Activated B cell treated with CpG ODN at 0.5 μM for 24 hours (primary cell): ENCODE measurements at regions of chr1 and their contacts with region 1.

Region 1: GRCh38 chr1:52702886-52703787 is 5.0 kb upstream of the COA7 start:
- DNase-seq: peak; percentile 74
- ATAC-seq: peak; percentile 87
- H3K4me3 Mint-ChIP-seq: peak overlapping the region; percentile 87
- H3K27ac Mint-ChIP-seq: peak overlapping the region; percentile 98
- H3K4me1 Mint-ChIP-seq: peaks cover 26% of the 10 kb centered on the region
- H3K27me3 Mint-ChIP-seq: peaks cover 2% of the 10 kb centered on the region
- CTCF ChIP-seq: no peak

Region 2: DNA sequence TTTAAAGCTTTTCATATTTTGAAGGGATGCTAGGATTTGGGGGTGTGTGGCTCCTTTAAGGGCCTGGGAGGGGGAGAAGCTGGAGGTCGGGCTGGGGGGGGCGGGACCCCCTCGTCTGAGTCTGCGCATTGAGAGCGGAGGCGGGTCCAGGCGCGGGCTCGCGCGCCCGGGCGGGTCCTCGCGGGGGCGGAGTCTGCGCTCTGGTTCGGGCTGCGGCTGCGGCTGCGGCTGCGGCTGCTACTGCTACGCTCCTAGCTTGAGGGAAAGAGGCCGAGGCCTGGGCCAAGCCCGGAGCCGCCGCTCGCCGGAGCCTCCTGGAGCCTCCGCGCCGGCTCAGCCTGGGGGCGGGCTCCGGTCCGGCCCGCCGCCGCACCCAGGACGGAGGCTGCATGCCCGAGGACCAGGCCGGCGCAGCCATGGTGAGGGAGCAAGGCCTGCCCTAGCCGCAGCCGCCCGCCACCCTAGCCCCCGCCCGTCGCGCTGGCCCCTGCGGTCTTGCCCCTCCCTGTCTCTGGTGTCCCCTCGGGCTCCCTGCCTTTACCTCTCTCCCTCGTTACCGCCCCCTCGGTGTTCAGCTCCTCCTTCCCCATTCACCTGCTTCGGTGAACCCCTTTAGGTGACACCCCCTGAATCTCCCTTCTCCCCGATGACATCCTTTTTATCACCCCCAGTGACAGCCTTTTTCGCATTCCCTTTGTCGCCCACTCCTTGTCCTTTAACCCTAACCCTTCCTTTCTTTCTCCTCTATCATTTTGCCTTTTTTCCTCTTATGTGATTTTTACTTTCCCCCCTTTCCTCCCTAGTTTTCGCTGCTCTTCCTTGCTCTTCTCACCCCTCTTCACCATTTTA is 23.4 kb after region 1 on chr1 and contains the start of gene ZYG11B:
- CTCF ChIA-PET with region 1: interaction called, 6 read pairs
- POLR2A ChIA-PET with region 1: interaction called, 39 read pairs
- intact Hi-C with region 1: loop called (anchors 1 kb)
- DNase-seq: peak; percentile 90
- ATAC-seq: peak; percentile 94
- H3K4me3 Mint-ChIP-seq: peak within 1 kb of the TSS; percentile 91
- H3K27ac Mint-ChIP-seq: peak within 1 kb of the TSS; percentile 85
- H3K4me1 Mint-ChIP-seq: peaks cover 35% of the 10 kb centered on the region
- H3K27me3 Mint-ChIP-seq: no peaks in the 10 kb centered on the region
- CTCF ChIP-seq: no peak
- total RNA-seq, gene ZYG11B: 14.9 and 17.3 TPM in 2 replicates

Region 3: DNA sequence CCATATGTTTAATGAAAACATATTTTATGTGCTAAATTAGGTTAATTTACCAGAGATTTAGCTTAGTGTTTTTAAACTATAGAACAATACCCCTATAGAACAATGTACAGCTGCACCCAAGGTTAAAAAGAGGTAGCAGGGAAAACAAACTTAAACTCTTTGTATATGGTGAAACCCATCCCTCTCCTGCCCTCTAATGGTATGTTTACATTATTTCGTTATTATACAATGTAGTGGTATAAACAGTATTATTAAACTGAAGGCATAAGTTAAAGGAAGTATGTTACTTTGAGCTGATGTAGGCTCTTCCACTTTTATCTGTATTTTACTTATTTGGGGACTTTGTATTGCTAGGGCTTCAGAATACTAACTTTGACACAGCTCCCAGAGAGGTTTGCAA is 122.7 kb after region 1 on chr1:
- CTCF ChIA-PET with region 1: interaction called, 5 read pairs
- POLR2A ChIA-PET with region 1: no interaction called
- intact Hi-C with region 1: loop called (anchors 2 kb)
- DNase-seq: no peak
- ATAC-seq: no peak
- H3K4me3 Mint-ChIP-seq: no peak overlapping the region
- H3K27ac Mint-ChIP-seq: no peak overlapping the region
- H3K4me1 Mint-ChIP-seq: no peaks in the 10 kb centered on the region
- H3K27me3 Mint-ChIP-seq: no peaks in the 10 kb centered on the region
- CTCF ChIP-seq: no peak

Region 4: GRCh38 chr1:52920791-52921291 is 217.7 kb after region 1 on chr1:
- CTCF ChIA-PET with region 1: interaction called, 4 read pairs
- POLR2A ChIA-PET with region 1: interaction called, 12 read pairs
- intact Hi-C with region 1: loop called (anchors 1 kb)
- DNase-seq: no peak
- ATAC-seq: no peak
- H3K4me3 Mint-ChIP-seq: peak overlapping the region; percentile 85
- H3K27ac Mint-ChIP-seq: no peak overlapping the region
- H3K4me1 Mint-ChIP-seq: peaks cover 18% of the 10 kb centered on the region
- H3K27me3 Mint-ChIP-seq: peaks cover 2% of the 10 kb centered on the region
- CTCF ChIP-seq: no peak

Region 5: DNA sequence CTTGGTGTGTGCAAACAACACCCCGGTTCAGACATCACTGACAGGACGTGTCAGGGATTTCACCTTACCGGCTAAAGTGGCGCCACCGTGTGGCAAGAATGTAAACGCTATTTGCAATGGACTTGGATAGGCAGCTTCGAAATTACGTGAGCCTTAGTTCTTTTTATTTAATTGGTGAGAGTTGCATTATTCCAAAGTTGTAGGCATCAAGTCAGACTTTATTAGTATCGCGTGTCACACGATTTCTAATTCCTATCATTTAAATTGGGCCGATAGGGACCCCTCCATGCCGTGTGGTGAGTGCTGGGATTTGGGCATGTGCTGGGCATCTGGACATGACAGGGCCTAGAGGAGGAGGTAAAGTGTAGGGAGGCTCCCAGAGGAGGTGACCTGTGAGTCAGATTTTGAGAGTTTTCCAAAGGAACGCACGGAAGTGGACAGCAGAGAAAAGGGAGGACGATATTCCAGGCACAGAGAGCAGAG is 479.0 kb after region 1 on chr1:
- CTCF ChIA-PET with region 1: interaction called, 4 read pairs
- POLR2A ChIA-PET with region 1: no interaction called
- intact Hi-C with region 1: loop called (anchors 1 kb)
- DNase-seq: peak; percentile 62
- ATAC-seq: peak; percentile 71
- H3K4me3 Mint-ChIP-seq: no peak overlapping the region
- H3K27ac Mint-ChIP-seq: no peak overlapping the region
- H3K4me1 Mint-ChIP-seq: no peaks in the 10 kb centered on the region
- H3K27me3 Mint-ChIP-seq: peaks cover 16% of the 10 kb centered on the region
- CTCF ChIP-seq: peak; percentile 57